ENCODE measurements at regions of chr17 and their contacts with region 1.

Region 1: DNA sequence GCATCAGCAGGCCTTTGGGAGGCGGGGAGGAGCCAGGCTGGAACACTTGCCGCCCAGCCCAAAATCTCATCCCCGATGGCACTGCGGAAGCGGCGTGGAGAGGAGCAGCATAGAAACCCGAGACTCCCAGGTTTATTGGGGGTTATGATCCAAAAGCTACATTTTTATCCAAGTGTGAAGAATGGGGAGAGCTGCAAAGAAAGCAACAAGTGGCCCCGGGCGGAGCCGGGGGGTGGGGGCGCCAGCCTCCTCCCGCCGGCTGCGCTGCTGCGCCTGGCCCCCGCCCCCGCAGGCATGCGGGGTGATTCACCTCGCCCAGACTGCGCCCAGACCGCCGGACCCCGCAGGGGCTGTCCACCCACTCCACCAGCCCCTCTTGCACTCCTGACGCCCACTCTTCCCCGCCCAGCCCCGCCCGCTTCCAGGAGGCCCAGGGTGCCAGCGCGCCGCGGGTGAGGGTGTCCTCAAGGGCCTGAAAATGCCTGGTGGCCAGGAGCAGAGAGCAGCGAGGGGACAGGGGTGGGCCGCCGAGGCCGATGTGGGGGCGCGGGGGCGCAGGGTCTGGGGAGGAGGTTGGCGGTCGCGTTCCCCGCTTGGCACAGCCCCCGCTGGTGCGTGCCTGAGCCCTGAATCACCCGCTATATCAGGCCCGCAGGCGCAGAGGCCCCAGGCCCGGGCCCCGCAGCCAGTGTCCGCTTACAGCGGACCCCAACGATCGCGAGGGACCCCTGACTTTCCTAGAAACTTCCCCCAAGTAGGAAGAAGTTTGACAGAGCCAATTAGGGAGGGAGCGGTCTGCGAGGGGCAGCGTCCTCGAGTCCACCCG is 1.3 kb downstream of the CAVIN1 start:
- DNase-seq: peak; percentile 41
- ATAC-seq: peak; percentile 36
- H3K4me3 ChIP-seq: peak overlapping the region in 4 of 5 experiments; percentile 38 to 63 (median 50)
- H3K4me3 Mint-ChIP-seq: peak overlapping the region; percentile 82
- H3K27ac ChIP-seq: no peak overlapping the region
- H3K27ac Mint-ChIP-seq: no peak overlapping the region
- H3K4me1 ChIP-seq: peaks cover 23 to 24% of the 10 kb centered on the region in 2 donors
- H3K4me1 Mint-ChIP-seq: peaks cover 21% of the 10 kb centered on the region
- H3K27me3 ChIP-seq: peaks cover 0 to 49% (median 27%) of the 10 kb centered on the region in 4 experiments
- H3K27me3 Mint-ChIP-seq: peaks cover 38% of the 10 kb centered on the region
- CTCF ChIP-seq: no peak

Region 2: DNA sequence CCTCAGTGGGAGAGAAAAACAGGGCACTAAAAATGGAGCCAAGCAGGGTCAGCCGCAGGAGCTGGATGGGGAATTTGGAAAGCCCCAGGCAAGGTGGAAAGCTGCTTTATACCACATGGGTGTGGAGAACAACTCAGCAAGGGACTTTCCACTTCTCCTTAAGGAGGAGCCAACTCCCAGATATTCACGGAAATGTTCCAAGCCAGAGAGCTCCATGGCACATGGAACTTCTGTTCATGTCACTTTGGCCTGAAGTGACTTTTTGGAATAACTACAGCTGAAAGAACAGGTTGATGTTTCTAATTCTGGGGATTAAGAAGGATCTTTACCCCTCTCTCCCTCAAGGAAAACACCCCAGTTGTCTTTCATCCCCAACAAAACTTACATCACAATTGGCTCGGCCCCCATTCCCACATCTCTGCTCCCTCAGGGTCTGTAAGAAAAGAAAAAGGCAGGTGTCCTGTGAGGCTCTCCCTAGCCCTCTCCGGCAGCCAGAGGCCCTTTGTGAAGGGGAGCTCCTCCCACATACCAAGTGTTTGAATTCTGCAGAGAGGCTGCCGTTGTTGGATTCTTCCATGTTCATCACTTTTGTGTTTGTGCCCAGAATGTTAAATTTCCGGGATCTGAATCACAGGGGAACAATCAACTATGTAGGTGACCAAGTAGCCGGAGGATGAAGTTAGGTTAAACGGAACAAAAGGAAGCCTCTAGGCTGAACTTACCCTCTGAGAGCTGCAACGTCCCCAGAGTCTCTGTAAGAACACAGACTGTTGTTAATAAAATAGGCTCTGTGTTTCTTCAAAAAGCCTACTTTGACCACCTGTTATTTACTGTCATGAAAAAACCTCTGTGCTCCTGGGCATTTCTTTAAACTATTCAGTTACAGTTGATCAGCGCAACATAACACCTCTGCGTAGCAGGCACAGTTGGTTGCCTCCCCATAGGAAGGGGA is 92.4 kb before region 1 on chr17:
- CTCF ChIA-PET with region 1: no interaction called
- POLR2A ChIA-PET with region 1: no interaction called
- intact Hi-C with region 1: no loop called
- DNase-seq: no peak
- ATAC-seq: no peak
- H3K4me3 ChIP-seq: no peak overlapping the region
- H3K4me3 Mint-ChIP-seq: no peak overlapping the region
- H3K27ac ChIP-seq: no peak overlapping the region
- H3K27ac Mint-ChIP-seq: no peak overlapping the region
- H3K4me1 ChIP-seq: no peaks in the 10 kb centered on the region
- H3K4me1 Mint-ChIP-seq: no peaks in the 10 kb centered on the region
- H3K27me3 ChIP-seq: no peaks in the 10 kb centered on the region
- H3K27me3 Mint-ChIP-seq: no peaks in the 10 kb centered on the region
- CTCF ChIP-seq: no peak

Region 3: GRCh38 chr17:42517516-42517915 is 95.8 kb after region 1 on chr17:
- CTCF ChIA-PET with region 1: interaction called, 13 read pairs
- POLR2A ChIA-PET with region 1: no interaction called
- intact Hi-C with region 1: no loop called
- DNase-seq: peak; percentile 87
- ATAC-seq: peak; percentile 90
- H3K4me3 ChIP-seq: no peak overlapping the region
- H3K4me3 Mint-ChIP-seq: no peak overlapping the region
- H3K27ac ChIP-seq: no peak overlapping the region
- H3K27ac Mint-ChIP-seq: peak overlapping the region; percentile 53
- H3K4me1 ChIP-seq: peaks cover 0 to 7% of the 10 kb centered on the region in 2 donors
- H3K4me1 Mint-ChIP-seq: peaks cover 3% of the 10 kb centered on the region
- H3K27me3 ChIP-seq: no peaks in the 10 kb centered on the region
- H3K27me3 Mint-ChIP-seq: no peaks in the 10 kb centered on the region
- CTCF ChIP-seq: peak; percentile 91

Region 4: GRCh38 chr17:42760652-42761581 is 339.2 kb after region 1 on chr17 and contains the start of gene RAMP2:
- CTCF ChIA-PET with region 1: no interaction called
- POLR2A ChIA-PET with region 1: no interaction called
- intact Hi-C with region 1: no loop called
- DNase-seq: peak; percentile 45
- ATAC-seq: peak; percentile 32
- H3K4me3 ChIP-seq: peak within 1 kb of the TSS in 4 of 5 experiments; percentile 13 to 54 (median 39)
- H3K4me3 Mint-ChIP-seq: peak within 1 kb of the TSS; percentile 85
- H3K27ac ChIP-seq: no peak within 1 kb of the TSS
- H3K27ac Mint-ChIP-seq: peak within 1 kb of the TSS; percentile 37
- H3K4me1 ChIP-seq: peaks cover 19 to 23% of the 10 kb centered on the region in 2 donors
- H3K4me1 Mint-ChIP-seq: peaks cover 23% of the 10 kb centered on the region
- H3K27me3 ChIP-seq: peaks cover 0 to 48% (median 18%) of the 10 kb centered on the region in 4 experiments
- H3K27me3 Mint-ChIP-seq: peaks cover 50% of the 10 kb centered on the region
- CTCF ChIP-seq: no peak
- total RNA-seq, gene RAMP2: not detected in 2 replicates

Measured in B cell (primary cell).